Calu3 (cell line): ENCODE measurements at regions of chr17 and their contacts with region 1.

Region 1: DNA sequence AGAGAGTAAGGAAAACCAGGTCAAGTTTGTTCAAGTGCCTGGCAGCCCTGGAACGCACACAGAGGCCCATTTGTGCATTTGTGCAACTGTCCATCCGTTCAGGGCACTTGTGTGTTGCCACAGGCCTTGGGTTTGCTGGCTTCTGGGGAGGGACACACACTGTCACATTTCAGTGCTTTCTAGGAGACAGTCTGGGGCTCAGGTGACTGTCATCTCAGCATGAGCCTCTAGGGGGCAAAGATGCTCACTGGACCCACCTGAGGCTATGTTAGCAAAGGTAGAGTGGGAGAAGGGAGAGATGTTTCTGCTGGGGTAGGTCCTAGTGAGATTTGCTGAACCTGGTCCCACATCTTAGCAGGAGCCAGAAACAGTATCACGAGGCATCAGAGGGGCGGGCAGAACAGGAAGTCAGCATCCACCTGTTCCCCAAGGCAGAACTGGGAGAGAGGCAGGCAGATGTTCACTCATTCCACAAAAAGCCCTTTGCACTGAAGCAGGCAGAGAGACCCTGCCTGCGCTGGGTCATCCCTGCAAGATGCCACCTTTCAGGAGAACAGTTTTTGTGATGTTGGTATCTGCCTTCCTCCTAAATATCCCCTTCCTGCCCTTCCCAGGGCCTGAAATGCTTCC is 48.5 kb downstream of the RAI1 start:
- DNase-seq: peak; percentile 69
- H3K4me3 Mint-ChIP-seq: peak overlapping the region; percentile 26
- H3K27ac Mint-ChIP-seq: peak overlapping the region; percentile 63
- H3K4me1 Mint-ChIP-seq: peaks cover 52% of the 10 kb centered on the region
- H3K27me3 Mint-ChIP-seq: no peaks in the 10 kb centered on the region
- CTCF ChIP-seq: peak; percentile 69

Region 2: DNA sequence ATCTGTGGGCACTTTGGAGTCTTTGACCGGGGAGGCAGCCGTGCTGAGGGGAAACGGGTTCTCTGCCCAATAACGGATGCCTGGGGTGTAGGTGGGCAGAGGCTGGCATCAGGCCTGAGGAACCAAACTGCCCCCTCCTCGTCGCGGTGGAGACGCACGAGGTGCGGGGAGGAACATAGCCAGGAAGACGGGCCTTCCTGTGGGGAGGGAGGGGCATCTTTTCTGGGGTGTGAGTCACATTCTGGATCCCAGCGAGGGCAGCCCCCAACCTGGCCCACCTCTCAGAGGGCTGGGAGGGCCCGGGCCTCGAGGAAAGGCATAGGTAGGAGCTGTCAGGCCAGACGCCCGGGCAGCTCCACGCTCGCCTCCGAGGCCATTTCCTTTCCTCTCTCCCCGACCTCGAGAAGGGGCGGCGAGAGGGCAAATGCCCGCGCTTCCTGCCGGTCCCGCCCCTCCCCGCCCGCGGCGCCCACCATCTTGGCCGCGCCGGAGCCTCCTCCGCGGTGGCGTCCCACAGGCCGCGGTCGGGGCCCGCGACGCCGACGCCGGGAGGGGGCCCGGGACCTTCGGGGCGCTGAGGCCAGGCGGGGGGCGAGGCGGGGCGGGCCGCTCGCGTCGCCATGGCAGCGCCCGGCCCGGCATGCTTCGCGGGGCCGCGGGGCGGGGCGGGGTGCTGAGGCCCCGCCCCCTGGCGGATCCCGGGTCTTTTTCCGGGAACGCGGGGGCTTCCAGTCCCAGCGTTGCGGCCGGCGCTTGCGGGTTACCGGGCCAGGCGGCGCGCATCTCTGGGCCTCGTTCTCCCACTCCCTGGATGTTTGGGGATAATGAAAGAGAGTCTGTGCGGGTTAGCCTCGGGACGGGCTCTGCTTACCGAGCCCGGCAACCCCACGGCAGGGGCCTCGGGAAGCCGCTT is 35.3 kb before region 1 on chr17:
- CTCF ChIA-PET with region 1: interaction called, 3 read pairs
- intact Hi-C with region 1: loop called (anchors 5 kb)
- DNase-seq: peak; percentile 63
- H3K4me3 Mint-ChIP-seq: peak overlapping the region; percentile 74
- H3K27ac Mint-ChIP-seq: peak overlapping the region; percentile 95
- H3K4me1 Mint-ChIP-seq: peaks cover 61% of the 10 kb centered on the region
- H3K27me3 Mint-ChIP-seq: no peaks in the 10 kb centered on the region
- CTCF ChIP-seq: no peak

Region 3: GRCh38 chr17:17783116-17783824 is 53.5 kb after region 1 on chr17:
- CTCF ChIA-PET with region 1: no interaction called
- intact Hi-C with region 1: loop called (anchors 10 kb)
- DNase-seq: peak; percentile 49
- H3K4me3 Mint-ChIP-seq: peak overlapping the region; percentile 65
- H3K27ac Mint-ChIP-seq: no peak overlapping the region
- H3K4me1 Mint-ChIP-seq: peaks cover 38% of the 10 kb centered on the region
- H3K27me3 Mint-ChIP-seq: no peaks in the 10 kb centered on the region
- CTCF ChIP-seq: peak; percentile 27